ENCODE measurements at regions of chr2 and their contacts with region 1.

Region 1: DNA sequence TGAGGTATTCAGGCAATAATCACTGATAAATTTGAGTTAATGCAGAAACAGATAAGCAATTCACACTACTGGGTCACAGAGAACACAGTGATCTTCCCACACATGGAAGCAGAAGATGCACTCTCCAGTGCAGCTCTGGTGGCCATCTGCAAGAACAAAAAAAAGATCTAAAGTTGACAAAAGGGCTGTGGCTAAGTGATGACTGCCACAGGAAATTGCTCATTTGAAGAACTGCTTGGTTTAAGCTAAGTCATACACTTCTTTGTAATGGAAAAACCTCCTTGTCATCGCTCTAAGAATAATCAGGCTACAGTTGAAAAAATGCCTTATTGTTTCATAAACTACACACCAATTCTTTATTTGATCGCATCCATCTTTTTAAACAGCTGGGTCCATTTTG is 115.1 kb downstream of the DTNB start:
- DNase-seq: peak; percentile 62
- H3K4me3 Mint-ChIP-seq: no peak overlapping the region
- H3K27ac Mint-ChIP-seq: peak overlapping the region; percentile 77
- H3K4me1 Mint-ChIP-seq: peaks cover 38% of the 10 kb centered on the region
- H3K27me3 Mint-ChIP-seq: no peaks in the 10 kb centered on the region

Region 2: GRCh38 chr2:25543939-25544844 is 14.1 kb before region 1 on chr2:
- CTCF ChIA-PET with region 1: interaction called, 10 read pairs
- POLR2A ChIA-PET with region 1: no interaction called
- DNase-seq: no peak
- H3K4me3 Mint-ChIP-seq: no peak overlapping the region
- H3K27ac Mint-ChIP-seq: no peak overlapping the region
- H3K4me1 Mint-ChIP-seq: peaks cover 4% of the 10 kb centered on the region
- H3K27me3 Mint-ChIP-seq: no peaks in the 10 kb centered on the region

Region 3: GRCh38 chr2:25586726-25587144 is 28.5 kb after region 1 on chr2:
- CTCF ChIA-PET with region 1: no interaction called
- POLR2A ChIA-PET with region 1: no interaction called
- DNase-seq: no peak
- H3K4me3 Mint-ChIP-seq: no peak overlapping the region
- H3K27ac Mint-ChIP-seq: peak overlapping the region; percentile 50
- H3K4me1 Mint-ChIP-seq: peaks cover 25% of the 10 kb centered on the region
- H3K27me3 Mint-ChIP-seq: no peaks in the 10 kb centered on the region

Measured in activated CD4-positive, alpha-beta T cell treated with anti-CD3 and anti-CD28 coated beads, Interleukin-2, amount 10 ng/mL, durations not matched to agents 7 days and 5 days (primary cell).